A673 (cell line): ENCODE measurements at regions of chr17 and their contacts with region 1.

Region 1: DNA sequence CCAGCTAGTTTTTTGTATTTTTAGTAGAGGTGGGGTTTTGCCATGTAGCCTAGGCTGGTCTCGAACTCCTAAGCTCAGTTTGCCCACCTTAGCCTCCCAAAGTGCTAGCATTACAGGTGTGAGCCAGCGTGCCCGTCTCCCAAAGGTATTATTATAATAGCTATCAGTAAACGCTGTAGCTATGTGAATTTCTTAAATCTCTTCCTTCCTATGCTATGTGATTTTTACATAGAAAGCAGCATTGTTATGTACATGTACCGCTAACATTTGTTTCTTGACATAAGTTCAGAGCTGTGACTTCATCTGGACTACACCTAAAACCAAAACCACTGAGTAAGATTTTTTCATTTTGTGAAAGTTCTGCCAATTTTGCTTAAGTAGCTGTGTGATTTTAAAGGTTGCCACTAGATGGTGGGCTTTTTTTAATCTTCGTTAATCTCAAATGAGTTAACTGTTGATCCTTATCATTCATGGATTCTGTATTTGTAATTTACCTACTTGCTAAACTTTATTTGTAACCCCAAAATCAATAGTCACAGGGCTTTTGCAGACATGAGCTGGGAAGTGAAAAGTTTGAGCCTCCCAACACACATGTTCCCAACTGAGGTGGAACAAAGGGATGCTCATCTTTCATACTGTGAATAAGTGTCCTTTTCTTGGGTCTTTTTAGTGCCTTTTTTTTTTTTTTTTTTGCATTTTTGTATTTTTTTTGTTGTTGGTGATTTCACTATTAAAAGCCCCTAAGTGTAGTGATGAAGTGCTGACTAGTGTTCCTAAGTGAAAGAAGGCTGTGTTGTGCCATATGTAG is 21.9 kb downstream of the PRKAR1A start:
- DNase-seq: peak; percentile 40
- H3K4me3 ChIP-seq: no peak overlapping the region
- H3K27ac ChIP-seq: no peak overlapping the region
- H3K4me1 ChIP-seq: no peaks in the 10 kb centered on the region
- H3K27me3 ChIP-seq: no peaks in the 10 kb centered on the region
- CTCF ChIP-seq: peak; percentile 59

Region 2: DNA sequence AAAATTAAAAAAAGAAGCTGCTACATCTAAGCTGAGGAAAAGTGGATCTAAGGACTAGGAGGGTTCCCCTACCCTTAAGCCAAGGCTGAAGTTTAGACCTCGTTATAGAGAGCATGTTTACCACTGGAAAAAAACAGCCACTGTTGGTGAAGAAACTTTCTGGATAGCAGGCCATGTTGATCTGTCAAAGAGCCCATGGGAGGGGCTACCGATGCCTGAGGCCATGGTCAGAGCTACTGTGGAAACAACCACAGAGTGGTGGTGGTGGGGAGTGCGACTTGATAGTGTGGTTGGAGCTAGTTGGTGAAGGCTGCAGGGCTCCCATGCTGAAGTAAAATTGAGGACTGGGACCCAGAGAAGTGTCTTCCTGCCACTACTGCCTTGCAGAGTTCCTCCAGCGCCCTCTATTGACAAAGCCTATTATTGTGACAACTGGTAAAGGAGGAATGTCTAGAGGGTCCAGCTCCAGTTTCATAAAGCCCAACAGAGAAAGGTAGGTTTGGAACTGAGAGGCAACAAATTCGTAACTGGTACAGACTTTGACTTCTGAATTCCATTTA is 79.7 kb after region 1 on chr17:
- CTCF ChIA-PET with region 1: interaction called, 11 read pairs
- POLR2A ChIA-PET with region 1: no interaction called
- intact Hi-C with region 1: no loop called
- DNase-seq: peak; percentile 84
- H3K4me3 ChIP-seq: no peak overlapping the region
- H3K27ac ChIP-seq: no peak overlapping the region
- H3K4me1 ChIP-seq: no peaks in the 10 kb centered on the region
- H3K27me3 ChIP-seq: no peaks in the 10 kb centered on the region
- CTCF ChIP-seq: peak; percentile 85

Region 3: GRCh38 chr17:68697850-68698361 is 163.8 kb after region 1 on chr17:
- CTCF ChIA-PET with region 1: no interaction called
- POLR2A ChIA-PET with region 1: no interaction called
- intact Hi-C with region 1: no loop called
- DNase-seq: no peak
- H3K4me3 ChIP-seq: no peak overlapping the region
- H3K27ac ChIP-seq: no peak overlapping the region
- H3K4me1 ChIP-seq: no peaks in the 10 kb centered on the region
- H3K27me3 ChIP-seq: no peaks in the 10 kb centered on the region
- CTCF ChIP-seq: no peak

Region 4: DNA sequence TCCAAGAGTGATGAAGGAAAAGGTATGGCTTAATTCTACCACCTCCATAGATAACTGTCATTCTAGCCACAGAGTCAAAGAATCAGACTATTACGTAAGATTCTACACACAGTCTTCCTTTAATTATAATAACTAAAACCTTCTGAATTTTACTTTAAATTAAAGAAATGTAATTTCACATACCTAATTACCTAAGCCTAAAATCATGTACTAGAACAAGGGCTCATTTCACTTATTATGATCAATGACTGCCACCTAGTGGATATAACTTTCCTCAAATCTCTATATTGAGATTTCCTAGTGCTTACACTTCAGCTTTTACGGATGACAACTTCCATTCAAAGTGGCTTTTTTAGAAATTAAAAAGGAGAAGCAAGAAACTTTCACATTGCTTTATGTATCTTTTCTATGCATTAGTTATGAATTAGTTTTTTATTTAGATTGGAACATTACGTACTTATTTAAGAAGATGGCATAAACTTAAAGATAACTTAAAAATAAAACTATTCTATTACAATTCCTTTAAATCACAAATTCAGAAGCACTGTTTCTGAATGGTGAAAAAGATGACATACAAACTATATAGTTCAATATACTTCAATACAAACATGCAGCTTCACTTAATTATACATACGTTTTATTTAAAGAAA is 712.8 kb after region 1 on chr17:
- CTCF ChIA-PET with region 1: interaction called, 5 read pairs
- POLR2A ChIA-PET with region 1: no interaction called
- intact Hi-C with region 1: loop called (anchors 5 kb)
- DNase-seq: peak; percentile 77
- H3K4me3 ChIP-seq: no peak overlapping the region
- H3K27ac ChIP-seq: no peak overlapping the region
- H3K4me1 ChIP-seq: peaks cover 10% of the 10 kb centered on the region
- H3K27me3 ChIP-seq: no peaks in the 10 kb centered on the region
- CTCF ChIP-seq: peak; percentile 65